HEK293T (cell line): ENCODE measurements at regions of chr6 and their contacts with region 1.

Region 1: GRCh38 chr6:152301764-152302568 is 335.2 kb downstream of the SYNE1 start:
- DNase-seq: peak; percentile 90

Region 2: DNA sequence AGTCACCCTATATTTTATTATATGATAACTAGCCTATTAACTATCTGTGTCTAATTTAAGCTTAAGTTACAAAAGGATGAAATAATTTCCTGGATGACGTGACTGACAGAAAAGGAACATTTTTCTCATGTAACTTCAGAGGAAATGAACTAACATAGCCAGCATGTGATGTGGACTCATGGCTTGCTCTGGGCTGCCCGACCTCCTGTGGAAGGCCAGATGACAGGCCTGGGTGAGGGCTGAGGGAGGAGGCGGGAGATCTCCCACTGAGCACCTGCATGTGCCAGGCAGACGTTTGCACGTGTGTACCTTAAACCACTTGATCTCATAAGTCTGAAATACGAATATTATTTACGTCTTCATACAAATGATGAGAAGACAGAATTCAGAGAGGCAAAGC is 14.1 kb after region 1 on chr6:
- CTCF ChIA-PET with region 1: interaction called, 3 read pairs
- POLR2A ChIA-PET with region 1: interaction called, 22 read pairs
- DNase-seq: no peak

Region 3: GRCh38 chr6:152380993-152381898 is 79.3 kb after region 1 on chr6:
- CTCF ChIA-PET with region 1: no interaction called
- POLR2A ChIA-PET with region 1: interaction called, 11 read pairs
- DNase-seq: peak; percentile 62